ENCODE measurements at regions of chr18 and their contacts with region 1.

Region 1: GRCh38 chr18:78242254-78242643 is 737.4 kb upstream of the SALL3 start:
- DNase-seq: peak in 1 of 2 donors; percentile 74
- H3K4me3 ChIP-seq: no peak overlapping the region
- CTCF ChIP-seq: no peak
- POLR2A ChIP-seq: no peak

Region 2: GRCh38 chr18:76668546-76668945 is 1573.7 kb before region 1 on chr18:
- intact Hi-C with region 1: loop called (anchors 5 kb)
- DNase-seq: no peak
- H3K4me3 ChIP-seq: no peak overlapping the region
- CTCF ChIP-seq: no peak
- POLR2A ChIP-seq: no peak

Region 3: DNA sequence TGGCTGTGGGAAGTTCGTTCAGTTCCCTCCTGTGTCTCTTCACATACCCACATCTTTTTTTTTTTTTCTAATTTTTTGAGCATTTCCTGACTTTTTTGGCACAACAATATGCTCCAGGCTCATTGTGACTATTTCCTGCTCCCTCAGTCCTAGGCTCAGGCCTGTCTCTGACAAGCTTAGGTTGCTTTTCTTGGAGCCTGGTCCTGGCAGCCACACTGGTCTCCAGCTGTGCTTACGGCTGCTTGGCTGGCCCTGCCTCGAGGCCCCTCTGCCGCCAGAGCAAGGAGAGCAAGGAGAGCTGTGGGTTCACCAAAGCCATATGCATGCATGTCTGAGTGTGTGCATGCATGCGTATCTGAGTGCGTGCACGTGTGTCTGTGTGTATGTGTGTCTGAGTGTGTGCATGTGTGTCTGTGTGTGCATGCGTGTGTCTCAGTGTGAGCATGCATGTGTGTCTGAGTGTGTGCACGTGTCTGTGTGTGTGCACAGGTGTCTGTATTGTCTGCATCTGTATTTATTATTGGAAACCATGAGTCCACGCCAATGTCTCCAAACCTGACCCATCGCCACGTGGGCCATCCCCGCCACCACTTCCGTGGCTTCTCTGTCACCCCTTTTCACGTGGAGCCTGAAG is 28.8 kb before region 1 on chr18:
- intact Hi-C with region 1: no loop called
- DNase-seq: no peak
- H3K4me3 ChIP-seq: no peak overlapping the region
- CTCF ChIP-seq: no peak
- POLR2A ChIP-seq: no peak

Measured in lower leg skin (tissue), 4 donors.